ENCODE measurements at regions of chr5 and their contacts with region 1.

Region 1: GRCh38 chr5:57267805-57268204 is 93.9 kb downstream of the GPBP1 start:
- DNase-seq: no peak
- ATAC-seq: no peak
- H3K4me3 Mint-ChIP-seq: no peak overlapping the region
- H3K27ac Mint-ChIP-seq: no peak overlapping the region
- H3K4me1 Mint-ChIP-seq: no peaks in the 10 kb centered on the region
- H3K27me3 Mint-ChIP-seq: peaks cover 11% of the 10 kb centered on the region

Region 2: GRCh38 chr5:56900858-56901578 is 366.8 kb before region 1 on chr5:
- CTCF ChIA-PET with region 1: interaction called, 10 read pairs
- POLR2A ChIA-PET with region 1: no interaction called
- DNase-seq: peak; percentile 51
- ATAC-seq: peak; percentile 58
- H3K4me3 Mint-ChIP-seq: no peak overlapping the region
- H3K27ac Mint-ChIP-seq: no peak overlapping the region
- H3K4me1 Mint-ChIP-seq: no peaks in the 10 kb centered on the region
- H3K27me3 Mint-ChIP-seq: peaks cover 17% of the 10 kb centered on the region

Region 3: DNA sequence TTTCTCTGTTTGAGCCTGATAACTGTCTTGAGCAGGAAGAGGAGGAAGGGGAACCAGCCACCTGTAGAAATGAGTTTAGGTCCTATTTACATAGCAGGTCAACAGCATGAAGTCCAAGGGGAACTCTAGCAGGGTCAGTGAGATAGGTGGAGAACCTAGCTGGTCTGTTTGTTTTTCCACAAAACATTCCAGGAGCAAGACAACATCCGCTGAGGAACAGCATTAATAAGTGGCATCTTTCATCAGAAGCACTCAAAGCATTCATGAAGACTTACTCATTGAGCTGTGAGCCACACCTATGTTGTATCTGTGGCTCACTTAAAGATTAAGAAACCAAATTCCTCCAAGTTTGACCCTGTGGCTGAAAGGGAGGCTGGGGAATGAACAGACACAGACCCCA is 98.9 kb after region 1 on chr5:
- CTCF ChIA-PET with region 1: no interaction called
- POLR2A ChIA-PET with region 1: no interaction called
- DNase-seq: no peak
- ATAC-seq: no peak
- H3K4me3 Mint-ChIP-seq: no peak overlapping the region
- H3K27ac Mint-ChIP-seq: no peak overlapping the region
- H3K4me1 Mint-ChIP-seq: no peaks in the 10 kb centered on the region
- H3K27me3 Mint-ChIP-seq: peaks cover 15% of the 10 kb centered on the region